IMR-90 (cell line): ENCODE measurements at regions of chr19 and their contacts with region 1.

Region 1: DNA sequence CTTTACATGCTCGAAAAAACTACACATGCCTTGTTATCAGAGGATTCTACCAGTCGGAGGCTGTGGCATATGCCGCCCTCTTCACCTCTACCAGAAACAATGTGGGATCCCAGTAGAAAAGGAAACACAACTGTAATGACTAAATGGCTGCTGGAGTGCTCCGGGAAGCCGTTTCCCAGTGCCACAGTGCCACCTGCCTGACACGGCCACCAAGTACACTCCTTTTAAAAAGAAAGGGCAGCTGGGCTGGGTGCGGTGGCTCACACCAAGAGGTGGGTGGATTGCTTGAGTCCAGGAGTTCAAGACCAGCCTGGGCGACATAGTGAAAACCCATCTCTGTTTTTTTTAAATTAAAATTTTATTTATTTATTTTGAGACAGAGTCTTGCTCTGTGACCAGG is 67.3 kb downstream of the TRPM4 start:
- DNase-seq: peak; percentile 57
- ATAC-seq: peak; percentile 79
- H3K4me3 ChIP-seq: no peak overlapping the region
- H3K27ac ChIP-seq: no peak overlapping the region
- H3K4me1 ChIP-seq: no peaks in the 10 kb centered on the region
- H3K27me3 ChIP-seq: peaks cover 3% of the 10 kb centered on the region; the same call in 1 of the 2 replicates
- CTCF ChIP-seq: peak; percentile 60
- POLR2A ChIP-seq: no peak
- RAD21 ChIP-seq: peak; percentile 67

Region 2: DNA sequence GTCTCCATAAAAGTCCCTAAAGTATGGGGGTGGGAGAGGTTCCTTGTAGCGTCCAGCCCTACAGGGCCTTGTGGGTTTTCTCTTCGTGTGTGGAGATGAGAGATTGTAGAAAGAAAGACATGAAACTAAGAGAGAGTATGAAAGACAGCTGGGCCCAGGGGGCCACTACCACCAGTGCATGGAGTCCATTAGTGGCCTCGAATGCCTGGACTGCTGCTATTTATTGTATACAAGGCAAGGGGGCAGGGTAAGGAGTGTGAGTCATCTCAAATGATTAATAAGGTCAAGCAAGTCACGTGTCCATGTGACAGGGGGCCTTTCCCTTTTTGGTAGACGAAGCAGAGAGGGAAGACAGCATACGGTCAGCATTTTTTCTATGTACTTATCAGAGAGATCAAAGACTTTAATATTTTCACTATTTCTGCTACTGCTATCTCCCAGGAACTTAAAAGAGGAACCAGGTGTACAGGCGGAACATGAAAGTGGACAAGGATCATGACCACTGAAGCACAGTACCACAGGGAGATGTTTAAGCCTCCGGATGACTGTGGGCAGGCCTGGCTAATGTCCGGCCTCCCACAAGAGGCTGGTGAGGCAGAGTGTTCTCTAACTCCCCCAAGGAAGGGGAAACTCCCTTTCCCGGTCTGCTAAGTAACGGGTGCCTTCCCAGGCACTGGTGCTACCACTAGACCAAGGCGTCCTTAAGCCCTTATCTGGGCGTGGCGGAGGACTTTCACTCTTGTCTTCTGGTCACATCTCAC is 444.0 kb before region 1 on chr19:
- CTCF ChIA-PET with region 1: no interaction called
- POLR2A ChIA-PET with region 1: no interaction called
- dilution Hi-C with region 1: no loop called
- in situ Hi-C with region 1: no loop called
- intact Hi-C with region 1: loop called (anchors 10 kb)
- DNase-seq: peak; percentile 58
- ATAC-seq: peak; percentile 55
- H3K4me3 ChIP-seq: no peak overlapping the region
- H3K27ac ChIP-seq: no peak overlapping the region; the same call in 1 of the 2 replicates
- H3K4me1 ChIP-seq: peaks cover 5% of the 10 kb centered on the region
- H3K27me3 ChIP-seq: peaks cover 6% of the 10 kb centered on the region
- CTCF ChIP-seq: no peak
- POLR2A ChIP-seq: no peak
- RAD21 ChIP-seq: no peak

Region 3: DNA sequence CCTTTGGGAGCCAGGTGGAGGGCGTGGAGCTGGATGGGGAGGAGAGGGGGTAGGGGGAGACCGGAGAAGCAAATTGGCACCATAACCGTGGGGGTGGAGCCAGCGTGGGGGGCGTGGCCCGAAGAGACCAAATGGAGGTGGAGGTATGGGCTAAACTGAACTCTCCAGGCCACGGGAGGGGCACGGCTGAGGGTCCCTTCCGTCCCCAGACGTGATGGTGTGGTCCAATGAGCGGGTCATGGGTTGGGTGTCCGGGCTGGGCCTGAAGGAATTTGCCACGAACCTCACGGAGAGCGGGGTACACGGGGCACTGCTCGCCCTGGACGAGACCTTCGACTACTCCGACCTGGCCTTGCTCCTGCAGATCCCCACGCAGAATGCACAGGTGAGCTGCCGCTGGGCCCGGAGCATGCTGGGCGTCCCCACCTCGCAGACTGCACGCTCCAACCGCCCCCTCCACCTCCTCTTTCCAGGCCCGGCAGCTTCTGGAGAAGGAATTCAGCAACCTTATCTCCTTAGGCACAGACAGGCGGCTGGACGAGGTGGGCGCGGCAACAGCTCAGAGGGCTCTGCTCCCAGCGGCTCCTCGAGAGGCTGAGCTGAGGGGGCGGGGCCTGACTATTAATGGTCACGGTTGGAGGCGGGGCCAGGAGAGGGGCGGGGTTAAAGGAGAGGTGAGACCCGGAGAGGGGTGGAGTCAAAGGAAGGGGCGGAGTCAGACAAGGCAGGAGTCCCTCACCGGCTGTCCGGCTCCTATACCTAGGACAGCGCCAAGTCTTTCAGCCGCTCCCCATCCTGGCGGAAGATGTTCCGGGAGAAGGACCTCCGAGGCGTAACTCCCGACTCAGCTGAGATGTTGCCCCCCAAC is 75.8 kb before region 1 on chr19:
- CTCF ChIA-PET with region 1: no interaction called
- POLR2A ChIA-PET with region 1: no interaction called
- dilution Hi-C with region 1: no loop called
- in situ Hi-C with region 1: no loop called
- intact Hi-C with region 1: no loop called
- DNase-seq: peak; percentile 86
- ATAC-seq: peak; percentile 83
- H3K4me3 ChIP-seq: peak overlapping the region; percentile 53
- H3K27ac ChIP-seq: no peak overlapping the region
- H3K4me1 ChIP-seq: peaks cover 12% of the 10 kb centered on the region
- H3K27me3 ChIP-seq: no peaks in the 10 kb centered on the region
- CTCF ChIP-seq: no peak
- POLR2A ChIP-seq: no peak
- RAD21 ChIP-seq: no peak

Region 4: DNA sequence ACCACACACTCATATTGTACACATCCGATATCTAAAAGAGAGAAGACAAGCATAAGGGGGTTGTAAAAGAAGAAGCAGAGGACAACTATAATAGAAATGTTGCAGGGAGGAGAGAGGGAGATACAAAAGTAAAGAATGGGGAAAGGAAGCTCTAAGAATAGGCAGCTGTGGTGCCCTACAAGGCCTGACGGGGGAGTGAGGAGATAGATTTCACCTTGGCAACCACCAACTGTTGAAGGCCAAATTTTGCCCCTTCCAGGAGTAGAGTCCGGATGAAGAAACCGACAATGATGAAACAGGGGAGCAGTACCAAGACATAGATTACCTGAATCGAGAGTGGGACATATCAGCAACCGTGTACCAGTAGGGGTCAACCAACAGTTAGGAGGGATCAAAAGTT is 84.2 kb after region 1 on chr19:
- CTCF ChIA-PET with region 1: no interaction called
- POLR2A ChIA-PET with region 1: no interaction called
- dilution Hi-C with region 1: no loop called
- in situ Hi-C with region 1: no loop called
- intact Hi-C with region 1: no loop called
- DNase-seq: no peak
- ATAC-seq: no peak
- H3K4me3 ChIP-seq: no peak overlapping the region
- H3K27ac ChIP-seq: no peak overlapping the region
- H3K4me1 ChIP-seq: no peaks in the 10 kb centered on the region
- H3K27me3 ChIP-seq: no peaks in the 10 kb centered on the region
- CTCF ChIP-seq: no peak
- POLR2A ChIP-seq: no peak
- RAD21 ChIP-seq: no peak